Heart right ventricle (tissue), 16 donors: ENCODE measurements at regions of chr18 and their contacts with region 1.

Region 1: GRCh38 chr18:51051105-51051712 is 21.2 kb downstream of the SMAD4 start:
- DNase-seq: no peak
- ATAC-seq: peak; percentile 67 to 84 (median 76)
- H3K4me3 ChIP-seq: no peak overlapping the region
- H3K27ac ChIP-seq: no peak overlapping the region
- H3K4me1 ChIP-seq: peaks cover 0 to 34% (median 11%) of the 10 kb centered on the region in 9 donors
- H3K27me3 ChIP-seq: no peaks in the 10 kb centered on the region
- CTCF ChIP-seq: peak; percentile 65 to 83 (median 75)

Region 2: GRCh38 chr18:50602525-50602924 is 448.7 kb before region 1 on chr18:
- intact Hi-C with region 1: no loop called
- DNase-seq: no peak
- ATAC-seq: no peak
- H3K4me3 ChIP-seq: no peak overlapping the region
- H3K27ac ChIP-seq: no peak overlapping the region
- H3K4me1 ChIP-seq: peaks cover 0 to 8% (median 0%) of the 10 kb centered on the region in 9 donors
- H3K27me3 ChIP-seq: peaks cover 0 to 4% (median 0%) of the 10 kb centered on the region in 7 donors
- CTCF ChIP-seq: no peak

Region 3: DNA sequence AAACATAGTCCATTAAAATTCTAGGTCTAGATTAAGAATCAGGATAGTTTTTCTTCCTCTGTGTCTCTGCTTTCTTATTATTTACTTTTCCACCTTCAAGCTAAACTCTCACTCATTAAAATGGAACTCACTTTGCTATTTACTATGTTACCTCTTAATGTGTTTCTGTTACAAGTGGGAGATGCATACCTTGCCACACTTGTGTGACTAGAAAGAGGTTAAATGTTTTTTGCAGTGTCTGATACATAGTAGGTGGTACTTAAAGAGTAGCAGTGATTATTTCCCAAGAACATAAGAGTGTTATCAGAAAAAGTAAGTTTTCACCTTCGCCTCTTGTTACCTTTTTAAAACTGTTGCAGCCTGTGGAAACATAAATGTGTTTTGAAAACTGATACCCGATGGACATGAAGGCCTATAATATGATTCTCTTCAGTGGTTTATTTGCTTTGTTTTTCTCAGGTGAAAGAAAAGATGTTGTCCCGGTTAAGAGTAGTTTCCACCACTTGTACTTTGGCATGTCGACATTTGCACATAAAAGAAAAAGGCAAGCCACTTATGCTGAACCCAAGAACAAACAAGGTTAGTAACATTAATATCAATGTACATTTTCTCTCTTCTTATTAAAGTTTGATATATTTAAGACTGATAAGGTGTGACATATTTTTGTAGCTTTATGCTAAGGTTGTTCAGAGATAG is 155.7 kb before region 1 on chr18:
- intact Hi-C with region 1: loop called in 1 of 10 experiments (anchors 10 kb)
- DNase-seq: no peak
- ATAC-seq: no peak
- H3K4me3 ChIP-seq: no peak overlapping the region
- H3K27ac ChIP-seq: no peak overlapping the region
- H3K4me1 ChIP-seq: no peaks in the 10 kb centered on the region
- H3K27me3 ChIP-seq: no peaks in the 10 kb centered on the region
- CTCF ChIP-seq: no peak